ENCODE measurements at regions of chr3 and their contacts with region 1.

Region 1: DNA sequence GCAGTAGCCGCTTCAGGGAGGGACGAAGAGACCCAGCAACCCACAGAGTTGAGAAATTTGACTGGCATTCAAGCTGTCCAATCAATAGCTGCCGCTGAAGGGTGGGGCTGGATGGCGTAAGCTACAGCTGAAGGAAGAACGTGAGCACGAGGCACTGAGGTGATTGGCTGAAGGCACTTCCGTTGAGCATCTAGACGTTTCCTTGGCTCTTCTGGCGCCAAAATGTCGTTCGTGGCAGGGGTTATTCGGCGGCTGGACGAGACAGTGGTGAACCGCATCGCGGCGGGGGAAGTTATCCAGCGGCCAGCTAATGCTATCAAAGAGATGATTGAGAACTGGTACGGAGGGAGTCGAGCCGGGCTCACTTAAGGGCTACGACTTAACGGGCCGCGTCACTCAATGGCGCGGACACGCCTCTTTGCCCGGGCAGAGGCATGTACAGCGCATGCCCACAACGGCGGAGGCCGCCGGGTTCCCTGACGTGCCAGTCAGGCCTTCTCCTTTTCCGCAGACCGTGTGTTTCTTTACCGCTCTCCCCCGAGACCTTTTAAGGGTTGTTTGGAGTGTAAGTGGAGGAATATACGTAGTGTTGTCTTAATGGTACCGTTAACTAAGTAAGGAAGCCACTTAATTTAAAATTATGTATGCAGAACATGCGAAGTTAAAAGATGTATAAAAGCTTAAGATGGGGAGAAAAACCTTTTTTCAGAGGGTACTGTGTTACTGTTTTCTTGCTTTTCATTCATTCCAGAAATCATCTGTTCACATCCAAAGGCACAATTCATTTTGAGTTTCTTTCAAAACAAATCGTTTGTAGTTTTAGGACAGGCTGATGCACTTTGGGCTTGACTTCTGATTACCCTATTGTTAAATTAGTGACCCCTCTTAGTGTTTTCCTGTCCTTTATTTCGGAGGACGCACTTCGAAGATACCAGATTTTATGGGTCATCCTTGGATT is at the start of gene MLH1:
- DNase-seq: peak; percentile 100
- H3K4me3 ChIP-seq: peak within 1 kb of the TSS; percentile 83
- H3K27ac ChIP-seq: peak within 1 kb of the TSS; percentile 81
- H3K4me1 ChIP-seq: peaks cover 25% of the 10 kb centered on the region
- CTCF ChIP-seq: no peak
- total RNA-seq, gene MLH1: 94.2 and 124 TPM in 2 replicates

Region 2: DNA sequence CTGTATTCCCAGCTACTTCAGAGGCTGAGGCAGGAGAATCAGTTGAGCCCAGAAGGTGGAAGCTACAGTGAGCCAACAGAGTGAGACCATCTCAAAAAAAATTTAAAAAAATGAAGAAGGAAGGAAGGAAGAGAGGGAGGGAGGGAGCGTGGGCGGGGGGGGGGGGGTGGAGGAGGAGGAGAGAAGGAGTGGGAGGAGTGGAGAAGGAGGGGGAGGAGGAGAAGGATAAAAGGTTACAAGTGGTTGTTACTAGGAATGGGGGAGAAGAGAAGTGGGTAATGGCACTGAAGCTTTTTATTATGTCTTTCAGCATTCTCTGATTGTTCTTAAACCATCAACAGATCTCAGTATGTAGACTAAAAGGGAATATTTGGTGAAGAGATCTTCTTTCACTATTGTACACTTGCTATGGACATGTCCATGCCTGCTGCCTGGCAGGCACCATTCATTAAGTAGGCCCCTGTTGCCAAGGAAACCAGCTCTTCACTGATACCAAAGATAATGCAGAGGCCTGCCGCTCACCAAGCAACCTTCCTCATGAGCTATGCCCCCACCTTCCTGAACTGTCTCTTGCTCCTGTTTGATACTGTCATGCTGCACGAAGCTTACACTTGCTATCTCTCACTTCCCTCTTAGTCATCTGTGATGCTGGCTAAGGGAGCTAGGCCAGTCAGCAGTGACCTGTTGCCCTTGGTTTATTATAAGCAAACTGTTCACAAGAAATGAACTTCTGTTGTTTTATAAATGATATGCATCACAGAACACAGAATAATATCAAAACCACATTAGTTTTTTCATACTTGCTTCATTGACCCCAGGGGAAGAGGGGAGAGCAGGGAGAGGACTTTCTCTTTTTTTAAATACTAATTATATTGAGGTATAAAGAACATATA is 23.8 kb before region 1 on chr3:
- CTCF ChIA-PET with region 1: interaction called, 7 read pairs
- POLR2A ChIA-PET with region 1: interaction called, 21 read pairs
- intact Hi-C with region 1: no loop called
- DNase-seq: peak; percentile 79
- H3K4me3 ChIP-seq: no peak overlapping the region
- H3K27ac ChIP-seq: peak overlapping the region; percentile 33
- H3K4me1 ChIP-seq: peaks cover 40% of the 10 kb centered on the region
- CTCF ChIP-seq: no peak

Region 3: GRCh38 chr3:36981006-36981405 is 12.6 kb before region 1 on chr3:
- CTCF ChIA-PET with region 1: no interaction called
- POLR2A ChIA-PET with region 1: interaction called, 10 read pairs
- intact Hi-C with region 1: no loop called
- DNase-seq: no peak
- H3K4me3 ChIP-seq: no peak overlapping the region
- H3K27ac ChIP-seq: no peak overlapping the region
- H3K4me1 ChIP-seq: no peaks in the 10 kb centered on the region
- CTCF ChIP-seq: no peak

Region 4: DNA sequence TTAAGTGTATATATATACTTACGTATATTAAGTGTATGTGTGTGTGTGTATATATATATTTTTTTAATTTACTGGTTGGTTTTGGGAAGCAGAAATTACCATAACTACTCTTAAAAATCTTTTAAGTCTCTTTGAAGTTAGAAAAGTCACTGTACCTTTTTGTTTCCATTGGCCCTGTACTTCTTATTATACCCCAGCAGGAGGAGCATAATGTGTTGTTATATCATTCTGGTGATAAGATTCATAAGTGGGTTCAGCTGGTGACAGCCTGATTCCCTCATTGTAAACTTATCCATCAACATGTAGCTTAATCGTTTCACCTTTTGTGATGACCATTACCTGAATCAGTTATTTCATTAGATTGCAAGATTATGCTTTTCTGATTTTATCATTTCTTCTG is 30.5 kb after region 1 on chr3:
- CTCF ChIA-PET with region 1: no interaction called
- POLR2A ChIA-PET with region 1: interaction called, 13 read pairs
- intact Hi-C with region 1: no loop called
- DNase-seq: peak; percentile 16
- H3K4me3 ChIP-seq: no peak overlapping the region
- H3K27ac ChIP-seq: peak overlapping the region; percentile 32
- H3K4me1 ChIP-seq: peaks cover 17% of the 10 kb centered on the region
- CTCF ChIP-seq: peak; percentile 50

Measured in OCI-LY7 (cell line).